G401 (cell line): ENCODE measurements at regions of chr4 and their contacts with region 1.

Region 1: DNA sequence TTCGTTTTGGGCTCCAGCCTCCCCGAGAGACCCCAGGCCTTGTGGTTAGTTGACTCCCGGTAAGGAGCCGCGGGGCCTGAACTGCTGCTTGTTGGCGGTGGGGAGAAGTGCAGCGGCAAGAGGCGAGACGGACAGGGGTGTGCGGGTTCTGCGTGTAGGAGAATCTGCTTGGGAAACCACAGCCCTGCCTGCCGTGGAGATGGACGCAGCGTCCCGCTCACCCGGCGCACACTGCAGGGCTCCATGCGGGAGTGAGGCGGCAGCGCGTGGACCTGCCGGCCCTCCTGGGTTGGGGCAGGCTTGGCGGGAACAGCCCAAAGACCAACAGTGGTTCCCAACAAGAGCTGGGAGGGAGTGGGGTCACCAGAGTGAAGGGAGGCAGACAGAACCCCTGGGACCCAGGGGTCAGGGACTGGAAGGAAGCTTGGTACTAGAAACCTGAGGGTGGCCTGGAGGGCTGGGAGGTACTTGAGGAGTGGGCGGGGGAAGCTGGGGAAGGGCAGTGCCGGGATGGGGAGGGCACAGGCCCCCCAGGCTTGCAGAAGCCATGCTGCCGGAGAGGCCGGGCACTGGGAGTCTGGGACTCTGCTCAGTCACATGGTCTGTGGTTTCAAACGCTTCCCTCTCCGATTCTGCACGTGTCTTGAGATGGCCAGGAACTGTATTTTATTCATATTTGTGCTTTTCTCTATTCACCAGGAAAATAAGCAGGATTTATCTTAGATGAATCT is 70.8 kb downstream of the RGS12 start:
- DNase-seq: no peak

Region 2: DNA sequence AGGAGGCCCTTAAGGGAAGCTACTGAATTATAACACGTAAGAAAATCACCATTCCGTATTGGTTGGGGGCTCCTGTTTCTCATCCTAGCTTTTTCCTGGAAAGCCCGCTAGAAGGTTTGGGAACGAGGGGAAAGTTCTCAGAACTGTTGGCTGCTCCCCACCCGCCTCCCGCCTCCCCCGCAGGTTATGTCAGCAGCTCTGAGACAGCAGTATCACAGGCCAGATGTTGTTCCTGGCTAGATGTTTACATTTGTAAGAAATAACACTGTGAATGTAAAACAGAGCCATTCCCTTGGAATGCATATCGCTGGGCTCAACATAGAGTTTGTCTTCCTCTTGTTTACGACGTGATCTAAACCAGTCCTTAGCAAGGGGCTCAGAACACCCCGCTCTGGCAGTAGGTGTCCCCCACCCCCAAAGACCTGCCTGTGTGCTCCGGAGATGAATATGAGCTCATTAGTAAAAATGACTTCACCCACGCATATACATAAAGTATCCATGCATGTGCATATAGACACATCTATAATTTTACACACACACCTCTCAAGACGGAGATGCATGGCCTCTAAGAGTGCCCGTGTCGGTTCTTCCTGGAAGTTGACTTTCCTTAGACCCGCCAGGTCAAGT is 121.6 kb before region 1 on chr4:
- in situ Hi-C with region 1: loop called (anchors 5 kb)
- DNase-seq: no peak